CD14-positive monocyte (primary cell): ENCODE measurements at regions of chr9 and their contacts with region 1.

Region 1: GRCh38 chr9:73104342-73104741 is 47.3 kb upstream of the ANXA1 start:
- DNase-seq: no peak
- H3K4me3 ChIP-seq: no peak overlapping the region
- H3K4me3 Mint-ChIP-seq: no peak overlapping the region
- H3K27ac ChIP-seq: no peak overlapping the region
- H3K27ac Mint-ChIP-seq: no peak overlapping the region
- H3K4me1 ChIP-seq: peaks cover 0 to 9% of the 10 kb centered on the region in 2 donors
- H3K4me1 Mint-ChIP-seq: peaks cover 6% of the 10 kb centered on the region
- H3K27me3 ChIP-seq: no peaks in the 10 kb centered on the region
- H3K27me3 Mint-ChIP-seq: no peaks in the 10 kb centered on the region
- CTCF ChIP-seq: no peak

Region 2: DNA sequence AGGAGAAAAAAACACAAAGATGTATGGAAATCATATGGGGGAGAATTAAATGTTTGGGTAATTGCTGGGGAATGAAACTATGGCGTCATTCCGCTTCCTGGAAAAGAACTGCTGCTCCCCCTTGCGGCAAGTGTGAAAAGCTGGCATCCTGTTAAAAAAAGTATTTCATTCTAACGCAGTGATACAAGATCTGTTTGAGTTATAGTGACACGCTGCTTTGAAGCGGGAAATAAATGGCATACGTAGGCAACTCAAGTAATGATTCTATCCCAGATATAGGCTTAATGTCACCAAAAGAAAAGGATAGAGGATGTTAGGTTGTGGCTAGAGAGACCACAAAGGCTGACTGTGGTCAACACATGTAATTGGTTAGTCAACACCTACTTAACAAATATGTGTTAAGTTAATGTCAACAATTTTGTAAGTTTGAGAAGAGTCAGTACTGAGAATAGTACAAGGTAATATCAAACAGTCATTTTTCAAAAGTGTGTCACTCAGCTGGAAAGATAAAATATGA is 81.3 kb before region 1 on chr9:
- intact Hi-C with region 1: no loop called
- DNase-seq: peak; percentile 36 to 62 (median 44)
- H3K4me3 ChIP-seq: no peak overlapping the region
- H3K4me3 Mint-ChIP-seq: no peak overlapping the region
- H3K27ac ChIP-seq: no peak overlapping the region
- H3K27ac Mint-ChIP-seq: no peak overlapping the region
- H3K4me1 ChIP-seq: no peaks in the 10 kb centered on the region
- H3K4me1 Mint-ChIP-seq: peaks cover 6% of the 10 kb centered on the region
- H3K27me3 ChIP-seq: no peaks in the 10 kb centered on the region
- H3K27me3 Mint-ChIP-seq: no peaks in the 10 kb centered on the region
- CTCF ChIP-seq: peak; percentile 94

Region 3: DNA sequence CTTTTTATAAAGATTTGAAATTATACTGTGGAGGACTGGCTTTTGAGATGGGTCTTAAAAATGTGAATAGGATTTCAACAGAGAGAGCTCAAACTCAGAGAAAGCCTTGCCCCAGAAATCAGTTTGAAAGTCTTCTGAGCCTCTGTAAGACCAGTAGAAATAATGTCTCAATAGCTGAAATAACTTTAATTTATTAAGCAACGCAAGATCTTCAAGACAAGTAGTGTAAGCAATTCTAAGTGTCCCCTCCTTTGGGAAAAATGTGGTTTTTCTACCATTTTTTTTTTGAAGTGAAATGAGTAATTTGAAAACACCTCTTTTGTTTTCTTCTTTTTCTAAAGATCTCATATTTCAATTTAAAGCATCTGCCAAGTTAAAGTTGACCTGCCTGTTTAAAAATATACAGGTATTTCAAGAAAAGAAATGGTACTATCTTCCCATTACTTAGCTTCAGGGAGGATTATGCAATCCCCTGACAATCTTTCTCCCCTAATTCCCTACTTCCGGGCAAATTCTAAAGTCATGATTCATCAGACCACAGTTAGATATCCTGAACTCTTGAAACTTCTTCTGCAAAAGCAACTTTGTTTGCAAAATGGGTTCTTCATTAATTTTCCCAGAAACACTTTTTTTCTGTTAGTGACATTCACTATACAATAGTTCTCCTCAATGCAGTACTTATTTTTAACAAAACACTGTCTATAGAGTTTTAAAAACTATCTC is 39.4 kb after region 1 on chr9:
- intact Hi-C with region 1: no loop called
- DNase-seq: peak; percentile 57 to 86 (median 82)
- H3K4me3 ChIP-seq: peak overlapping the region in 1 of 3 experiments; percentile 43
- H3K4me3 Mint-ChIP-seq: no peak overlapping the region
- H3K27ac ChIP-seq: peak overlapping the region in 1 of 2 donors; percentile 65
- H3K27ac Mint-ChIP-seq: peak overlapping the region; percentile 63 to 91 (median 85)
- H3K4me1 ChIP-seq: peaks cover 55 to 66% of the 10 kb centered on the region in 2 donors
- H3K4me1 Mint-ChIP-seq: peaks cover 58% of the 10 kb centered on the region
- H3K27me3 ChIP-seq: no peaks in the 10 kb centered on the region
- H3K27me3 Mint-ChIP-seq: no peaks in the 10 kb centered on the region
- CTCF ChIP-seq: no peak

Region 4: DNA sequence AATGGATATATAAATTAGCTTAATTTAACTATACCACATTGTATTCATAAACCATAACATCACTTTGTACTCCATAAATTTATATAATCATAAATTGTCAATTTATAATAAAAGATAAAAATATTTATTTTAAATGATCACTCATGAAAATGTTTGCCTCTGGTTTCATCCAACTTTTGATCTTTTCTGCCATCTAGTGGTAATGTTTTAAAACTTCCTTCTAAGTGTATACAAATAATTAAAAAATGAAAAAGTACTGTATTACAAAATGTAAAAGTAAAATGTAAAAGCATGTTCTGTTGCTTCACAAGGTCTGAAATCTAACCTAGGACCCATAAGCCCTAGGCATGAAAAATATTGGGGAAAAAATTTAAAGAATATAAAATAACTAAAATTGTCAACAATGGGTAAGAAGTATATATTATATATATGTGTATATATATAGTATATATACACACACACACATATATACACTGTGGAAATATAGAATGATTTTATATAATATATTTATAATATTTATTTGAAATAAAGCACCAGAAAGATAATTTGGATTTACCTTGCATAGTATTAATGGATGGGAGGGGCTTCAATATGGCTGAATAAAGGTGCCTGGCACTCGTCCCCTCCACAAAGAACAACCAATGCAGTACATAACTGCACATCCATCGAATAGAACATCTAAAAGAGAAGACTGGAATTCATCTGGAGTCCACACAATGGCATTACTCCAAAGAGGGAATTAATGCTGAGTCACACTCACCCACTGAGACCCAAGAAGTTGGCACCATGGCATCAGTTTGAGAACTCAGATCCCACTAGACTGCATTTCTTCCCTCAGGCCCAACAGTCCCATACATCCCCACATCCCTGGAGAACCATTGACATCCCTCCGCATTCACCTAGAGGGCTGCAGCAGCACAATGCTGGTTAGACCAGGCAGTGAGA is 79.8 kb after region 1 on chr9:
- intact Hi-C with region 1: loop called (anchors 2 to 5 kb)
- DNase-seq: peak in 2 of 3 donors; percentile 48 to 66
- H3K4me3 ChIP-seq: no peak overlapping the region
- H3K4me3 Mint-ChIP-seq: no peak overlapping the region
- H3K27ac ChIP-seq: no peak overlapping the region
- H3K27ac Mint-ChIP-seq: no peak overlapping the region
- H3K4me1 ChIP-seq: no peaks in the 10 kb centered on the region
- H3K4me1 Mint-ChIP-seq: no peaks in the 10 kb centered on the region
- H3K27me3 ChIP-seq: no peaks in the 10 kb centered on the region
- H3K27me3 Mint-ChIP-seq: peaks cover 0 to 3% (median 0%) of the 10 kb centered on the region in 3 donors
- CTCF ChIP-seq: peak; percentile 78

Region 5: DNA sequence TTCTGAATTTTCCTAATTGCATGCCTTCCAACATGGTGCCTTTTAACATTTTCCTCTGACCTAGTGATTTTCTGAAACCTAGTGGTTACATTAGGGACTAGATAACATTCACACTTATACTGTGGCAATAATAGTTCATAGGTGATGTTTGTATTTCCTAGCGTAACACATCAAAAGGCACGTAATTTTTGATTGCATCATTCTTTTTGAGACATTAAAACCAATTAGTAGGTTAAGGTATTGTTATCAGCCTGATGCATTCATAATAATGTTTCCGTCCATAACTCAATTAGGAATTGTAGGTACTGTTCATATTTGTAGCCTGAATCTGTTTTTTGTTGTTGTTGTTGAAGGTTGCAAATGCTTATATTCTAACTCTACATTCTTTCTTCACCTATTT is 239.7 kb after region 1 on chr9:
- intact Hi-C with region 1: no loop called
- DNase-seq: no peak
- H3K4me3 ChIP-seq: no peak overlapping the region
- H3K4me3 Mint-ChIP-seq: no peak overlapping the region
- H3K27ac ChIP-seq: no peak overlapping the region
- H3K27ac Mint-ChIP-seq: no peak overlapping the region
- H3K4me1 ChIP-seq: no peaks in the 10 kb centered on the region
- H3K4me1 Mint-ChIP-seq: no peaks in the 10 kb centered on the region
- H3K27me3 ChIP-seq: no peaks in the 10 kb centered on the region
- H3K27me3 Mint-ChIP-seq: peaks cover 0 to 2% (median 0%) of the 10 kb centered on the region in 3 donors
- CTCF ChIP-seq: no peak